Endothelial cell of umbilical vein (primary cell): ENCODE measurements at regions of chr7 and their contacts with region 1.

Region 1: DNA sequence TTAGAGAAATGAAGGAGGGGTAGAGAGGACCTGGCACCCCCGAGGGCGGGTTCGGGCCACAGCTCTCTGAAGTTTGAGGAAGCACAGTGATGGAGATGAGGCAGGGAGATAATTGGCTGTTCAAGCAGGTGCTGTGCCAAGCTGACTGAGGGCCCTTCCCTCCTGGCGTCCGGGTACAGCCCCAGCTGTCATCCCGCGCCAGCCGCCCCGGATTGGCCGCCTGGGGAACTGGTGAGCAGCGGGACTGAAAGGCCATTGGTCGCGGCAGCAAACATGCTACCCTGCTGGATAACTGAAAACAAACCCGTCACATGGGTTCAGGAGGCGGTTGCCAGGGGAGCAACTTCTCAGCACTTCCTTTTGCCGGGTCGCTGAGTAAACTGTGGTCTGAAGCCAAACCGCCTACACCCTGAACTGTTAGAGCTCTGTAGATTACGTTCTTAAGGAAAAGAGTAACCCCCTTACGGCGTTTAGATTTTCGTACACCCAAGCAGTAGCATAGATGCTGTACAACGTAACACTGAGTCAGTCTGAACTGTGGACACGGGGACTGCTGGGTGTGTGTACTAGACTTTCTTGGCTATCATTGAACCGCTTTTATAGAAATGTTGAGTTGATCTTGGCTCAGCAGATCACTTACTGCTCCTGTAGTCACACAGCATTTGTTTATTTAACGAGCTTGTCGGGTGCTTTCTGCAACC is 1.3 kb downstream of the INSIG1 start:
- DNase-seq: peak; percentile 96
- H3K4me3 ChIP-seq: peak overlapping the region; percentile 50 to 99 (median 91)
- H3K27ac ChIP-seq: peak overlapping the region; percentile 64
- H3K4me1 ChIP-seq: peaks cover 31% of the 10 kb centered on the region
- H3K27me3 ChIP-seq: no peaks in the 10 kb centered on the region
- CTCF ChIP-seq: no peak
- POLR2A ChIP-seq: peak; percentile 52

Region 2: GRCh38 chr7:155003376-155004214 is 295.4 kb before region 1 on chr7:
- CTCF ChIA-PET with region 1: no interaction called
- POLR2A ChIA-PET with region 1: no interaction called
- dilution Hi-C with region 1: no loop called
- intact Hi-C with region 1: loop called (anchors 1 kb)
- DNase-seq: peak; percentile 71
- H3K4me3 ChIP-seq: peak overlapping the region; percentile 91 to 94 (median 92)
- H3K27ac ChIP-seq: peak overlapping the region; percentile 87
- H3K4me1 ChIP-seq: peaks cover 11% of the 10 kb centered on the region
- H3K27me3 ChIP-seq: no peaks in the 10 kb centered on the region
- CTCF ChIP-seq: no peak
- POLR2A ChIP-seq: peak; percentile 75

Region 3: DNA sequence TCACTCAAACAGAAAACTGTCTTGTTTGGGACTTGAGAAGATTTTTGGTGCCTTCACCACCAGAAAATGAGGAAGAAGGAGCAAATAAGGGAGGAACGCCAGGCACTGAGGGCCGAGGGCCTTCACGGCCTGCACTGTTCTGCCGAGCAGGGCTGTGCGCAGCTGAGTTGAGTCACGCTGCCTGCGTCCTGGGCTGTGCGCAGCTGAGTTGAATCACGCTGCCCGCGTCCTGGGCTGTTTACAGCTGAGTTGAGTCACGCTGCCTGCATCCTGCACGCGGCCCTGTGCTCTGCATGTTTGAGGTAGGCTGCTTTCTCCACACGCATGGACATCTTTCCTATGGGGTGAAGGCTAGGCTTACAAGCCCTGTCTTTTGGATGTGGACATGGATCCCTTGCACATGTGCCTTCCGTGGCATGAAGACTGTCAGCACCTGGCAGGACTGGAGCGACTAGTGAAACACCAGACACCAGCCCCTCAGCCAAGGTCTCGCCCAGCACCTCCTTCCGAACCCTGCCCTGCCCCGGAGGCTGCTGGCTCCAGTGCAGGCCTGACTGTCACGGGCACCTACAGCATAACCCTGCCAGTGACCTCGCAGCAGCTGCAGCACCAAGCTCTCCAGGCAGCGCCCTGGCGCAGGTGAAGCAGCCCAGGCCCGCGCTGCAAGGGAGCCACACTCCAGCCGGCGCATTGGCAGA is 132.2 kb before region 1 on chr7:
- CTCF ChIA-PET with region 1: no interaction called
- POLR2A ChIA-PET with region 1: no interaction called
- dilution Hi-C with region 1: no loop called
- intact Hi-C with region 1: loop called (anchors 1 kb)
- DNase-seq: peak; percentile 84
- H3K4me3 ChIP-seq: no peak overlapping the region
- H3K27ac ChIP-seq: no peak overlapping the region
- H3K4me1 ChIP-seq: no peaks in the 10 kb centered on the region
- H3K27me3 ChIP-seq: no peaks in the 10 kb centered on the region
- CTCF ChIP-seq: no peak
- POLR2A ChIP-seq: no peak

Region 4: DNA sequence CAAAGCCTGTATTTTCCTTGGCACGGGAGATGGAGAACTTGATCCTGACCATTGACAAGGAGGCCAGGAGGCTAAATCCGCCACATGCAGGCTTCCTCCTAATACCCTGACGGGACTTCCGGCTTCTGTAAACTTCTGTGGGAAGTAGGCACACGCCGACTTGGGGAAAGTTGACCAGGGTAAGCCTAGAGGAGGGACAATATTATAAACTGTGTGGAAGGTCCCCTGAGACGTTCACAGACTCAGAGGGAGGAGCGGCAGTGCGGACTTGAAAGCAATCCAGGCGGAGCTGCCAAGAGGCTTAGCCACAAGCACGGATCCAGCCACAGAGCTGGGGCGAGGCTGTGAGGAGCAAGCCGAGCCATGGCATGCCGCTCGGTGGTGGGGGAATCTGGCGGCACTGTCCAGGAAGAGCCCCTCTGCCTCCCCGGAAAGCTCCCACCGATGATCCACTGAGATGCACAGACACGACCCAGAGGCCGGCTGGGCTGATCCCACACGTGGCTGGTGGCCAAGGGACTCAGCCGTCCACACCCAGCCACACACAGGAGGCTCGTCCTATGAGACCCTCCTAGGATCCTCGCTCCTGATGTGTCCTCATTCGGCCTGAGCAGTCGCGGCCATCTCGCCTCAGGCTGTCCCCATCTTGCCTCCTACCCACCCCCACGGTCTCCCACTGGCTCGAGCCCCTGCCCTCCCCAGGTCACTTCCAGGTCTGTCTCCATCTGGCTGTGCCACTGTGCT is 41.3 kb before region 1 on chr7:
- CTCF ChIA-PET with region 1: interaction called, 3 read pairs
- POLR2A ChIA-PET with region 1: interaction called, 3 read pairs
- dilution Hi-C with region 1: no loop called
- intact Hi-C with region 1: loop called (anchors 1 kb)
- DNase-seq: peak; percentile 73
- H3K4me3 ChIP-seq: no peak overlapping the region
- H3K27ac ChIP-seq: no peak overlapping the region
- H3K4me1 ChIP-seq: peaks cover 12% of the 10 kb centered on the region
- H3K27me3 ChIP-seq: no peaks in the 10 kb centered on the region
- CTCF ChIP-seq: no peak
- POLR2A ChIP-seq: no peak

Region 5: DNA sequence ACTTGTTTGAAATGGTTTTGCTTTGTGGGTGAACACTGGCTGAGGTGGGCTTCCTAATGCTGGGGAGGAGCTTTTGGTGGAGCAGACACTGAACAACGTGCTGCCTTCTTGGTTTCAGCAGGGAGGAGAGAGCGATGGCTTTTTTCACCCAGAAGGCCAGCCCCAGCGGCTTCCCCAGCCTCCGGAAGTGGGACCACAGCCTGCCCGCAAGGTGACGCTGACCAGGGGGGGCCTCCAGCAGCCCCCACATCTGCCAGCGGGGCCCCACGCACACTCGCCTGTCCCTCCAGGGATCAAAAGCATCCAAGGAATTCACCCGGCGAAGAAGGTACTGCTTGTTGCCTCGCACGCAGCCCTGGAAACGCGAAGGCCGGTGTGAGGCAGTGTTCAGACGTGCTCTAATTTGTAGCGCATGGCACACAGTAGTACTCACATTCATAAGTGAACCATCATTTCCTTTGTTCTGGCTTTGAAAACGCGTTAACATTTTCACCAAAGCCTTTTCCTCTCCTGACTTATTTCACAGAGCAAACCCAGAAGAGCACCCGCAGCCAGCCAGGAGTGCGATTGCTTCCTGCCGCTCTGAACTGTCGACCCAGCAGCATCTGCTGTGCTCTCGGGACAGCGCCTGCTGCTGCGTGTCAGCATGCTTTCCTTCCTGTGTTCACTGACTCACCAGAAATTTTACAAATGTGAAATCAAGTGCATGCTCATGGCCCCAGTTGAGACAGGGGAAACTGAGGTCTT is 464.9 kb after region 1 on chr7:
- CTCF ChIA-PET with region 1: no interaction called
- POLR2A ChIA-PET with region 1: no interaction called
- dilution Hi-C with region 1: no loop called
- intact Hi-C with region 1: loop called (anchors 10 kb)
- DNase-seq: peak; percentile 88
- H3K4me3 ChIP-seq: no peak overlapping the region
- H3K27ac ChIP-seq: peak overlapping the region; percentile 69
- H3K4me1 ChIP-seq: peaks cover 16% of the 10 kb centered on the region
- H3K27me3 ChIP-seq: no peaks in the 10 kb centered on the region
- CTCF ChIP-seq: no peak
- POLR2A ChIP-seq: no peak